ENCODE measurements at regions of chr7 and their contacts with region 1.

Region 1: DNA sequence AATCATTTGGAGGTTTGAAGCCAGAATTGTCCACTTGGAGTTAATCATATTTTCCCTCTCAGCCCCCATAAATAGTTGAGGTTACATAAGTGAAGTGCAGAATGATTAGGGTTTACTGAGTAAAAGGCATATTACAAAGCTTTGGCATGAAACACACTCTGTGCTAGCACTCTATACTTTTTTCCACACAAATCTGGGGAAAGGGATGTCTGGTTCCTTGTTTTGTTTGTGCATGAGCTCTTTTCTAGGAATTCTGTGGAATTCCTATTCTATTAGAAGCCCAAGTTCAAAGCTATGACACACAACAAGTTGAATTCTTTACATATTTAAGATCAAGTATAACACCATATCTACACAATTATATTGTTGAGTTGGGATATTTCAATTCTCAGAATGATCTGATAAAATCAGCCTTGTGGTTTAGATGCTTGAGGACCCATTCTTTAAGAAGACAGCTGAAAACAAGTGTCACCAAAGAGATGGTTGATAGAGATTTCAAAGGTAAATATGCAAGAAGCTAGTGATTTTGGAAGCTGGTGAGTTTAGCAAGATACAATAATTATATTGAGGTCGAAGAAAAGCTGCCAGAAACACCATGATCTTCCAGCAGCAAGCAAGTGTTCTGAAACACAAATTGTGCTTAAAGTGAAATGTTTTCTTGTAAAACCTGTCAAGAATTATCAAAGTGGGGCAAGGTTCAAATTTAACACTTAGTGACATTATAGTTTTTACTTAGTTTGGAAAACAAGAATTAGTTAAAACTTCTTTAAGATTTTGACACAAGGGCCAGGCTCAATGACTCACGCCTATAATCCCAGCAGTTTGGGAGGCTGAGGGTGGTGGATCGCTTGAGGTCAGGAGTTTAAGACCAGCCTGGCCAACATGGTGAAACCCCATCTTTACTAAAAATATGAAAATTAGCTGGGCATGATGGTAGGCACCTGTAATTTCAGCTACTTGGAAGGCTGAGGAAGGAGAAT is 122.6 kb downstream of the INHBA start:
- DNase-seq: peak; percentile 95
- H3K4me3 ChIP-seq: no peak overlapping the region
- H3K27ac ChIP-seq: peak overlapping the region; percentile 93
- H3K4me1 ChIP-seq: peaks cover 43% of the 10 kb centered on the region
- H3K27me3 ChIP-seq: no peaks in the 10 kb centered on the region
- CTCF ChIP-seq: no peak
- POLR2A ChIP-seq: no peak

Region 2: GRCh38 chr7:41010418-41010817 is 569.8 kb before region 1 on chr7:
- CTCF ChIA-PET with region 1: no interaction called
- POLR2A ChIA-PET with region 1: no interaction called
- dilution Hi-C with region 1: no loop called
- intact Hi-C with region 1: loop called (anchors 2 kb)
- DNase-seq: peak; percentile 12
- H3K4me3 ChIP-seq: no peak overlapping the region
- H3K27ac ChIP-seq: peak overlapping the region; percentile 14
- H3K4me1 ChIP-seq: peaks cover 8% of the 10 kb centered on the region
- H3K27me3 ChIP-seq: no peaks in the 10 kb centered on the region
- CTCF ChIP-seq: no peak
- POLR2A ChIP-seq: no peak

Region 3: GRCh38 chr7:41508755-41509154 is 71.5 kb before region 1 on chr7:
- CTCF ChIA-PET with region 1: no interaction called
- POLR2A ChIA-PET with region 1: no interaction called
- dilution Hi-C with region 1: no loop called
- intact Hi-C with region 1: loop called (anchors 1 kb)
- DNase-seq: peak; percentile 72
- H3K4me3 ChIP-seq: no peak overlapping the region
- H3K27ac ChIP-seq: peak overlapping the region; percentile 46
- H3K4me1 ChIP-seq: peaks cover 13% of the 10 kb centered on the region
- H3K27me3 ChIP-seq: no peaks in the 10 kb centered on the region
- CTCF ChIP-seq: no peak
- POLR2A ChIP-seq: no peak

Region 4: GRCh38 chr7:41731492-41732435 is 151.5 kb after region 1 on chr7:
- CTCF ChIA-PET with region 1: no interaction called
- POLR2A ChIA-PET with region 1: no interaction called
- dilution Hi-C with region 1: no loop called
- intact Hi-C with region 1: no loop called
- DNase-seq: peak; percentile 33
- H3K4me3 ChIP-seq: no peak overlapping the region
- H3K27ac ChIP-seq: no peak overlapping the region
- H3K4me1 ChIP-seq: no peaks in the 10 kb centered on the region
- H3K27me3 ChIP-seq: peaks cover 3 to 4% of the 10 kb centered on the region in 2 experiments
- CTCF ChIP-seq: peak; percentile 5 to 8
- POLR2A ChIP-seq: no peak